Heart left ventricle (tissue), 16 donors: ENCODE measurements at regions of chr11 and their contacts with region 1.

Region 1: GRCh38 chr11:63227521-63228107 is 15.8 kb downstream of the SLC22A25 start:
- DNase-seq: no peak
- ATAC-seq: no peak
- H3K4me3 ChIP-seq: no peak overlapping the region
- H3K27ac ChIP-seq: no peak overlapping the region
- H3K4me1 ChIP-seq: no peaks in the 10 kb centered on the region
- H3K27me3 ChIP-seq: peaks cover 0 to 8% (median 0%) of the 10 kb centered on the region in 9 donors
- CTCF ChIP-seq: no peak
- POLR2A ChIP-seq: no peak

Region 2: DNA sequence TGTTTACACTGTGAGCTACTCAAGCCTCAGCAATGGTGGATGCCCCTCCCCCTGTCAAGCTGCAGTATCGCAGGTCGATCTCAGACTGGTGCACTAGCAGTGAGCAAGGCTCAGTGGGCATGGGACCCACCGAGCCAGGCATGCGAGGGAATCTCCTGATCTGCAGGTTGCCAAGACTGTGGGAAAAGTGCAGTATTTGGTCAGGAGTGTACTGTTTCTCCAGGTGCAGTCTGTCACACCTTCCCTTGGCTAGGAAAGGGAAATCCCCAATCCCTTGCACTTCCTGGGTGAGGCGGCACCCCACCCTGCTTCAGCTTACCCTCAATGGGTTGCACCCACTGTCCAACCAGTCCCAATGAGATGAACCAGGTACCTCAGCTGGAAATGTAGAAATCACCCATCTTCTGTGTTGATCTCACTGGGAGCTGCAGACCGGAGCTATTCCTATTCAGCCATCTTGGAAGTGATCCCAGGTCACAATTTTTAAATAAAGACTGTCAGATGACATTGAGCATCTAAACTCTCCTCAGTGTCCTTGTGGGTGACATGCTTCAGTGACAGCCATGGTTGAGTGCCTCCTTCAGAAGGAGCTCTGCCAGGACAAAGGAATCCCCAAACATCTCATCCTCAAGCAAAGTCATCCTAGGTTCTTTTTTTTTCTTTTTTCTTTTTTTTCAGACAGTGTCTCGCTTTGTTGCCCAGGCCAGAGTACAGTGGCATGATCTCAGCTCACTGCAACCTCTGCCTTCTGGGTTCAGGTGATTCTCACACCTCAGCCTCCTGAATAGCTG is 94.4 kb before region 1 on chr11:
- intact Hi-C with region 1: loop called in 1 of 10 experiments (anchors 10 kb)
- DNase-seq: no peak
- ATAC-seq: no peak
- H3K4me3 ChIP-seq: no peak overlapping the region
- H3K27ac ChIP-seq: no peak overlapping the region
- H3K4me1 ChIP-seq: no peaks in the 10 kb centered on the region
- H3K27me3 ChIP-seq: peaks cover 0 to 5% (median 0%) of the 10 kb centered on the region in 9 donors
- CTCF ChIP-seq: no peak
- POLR2A ChIP-seq: no peak

Region 3: GRCh38 chr11:63518548-63518947 is 290.9 kb after region 1 on chr11:
- intact Hi-C with region 1: no loop called
- DNase-seq: no peak
- ATAC-seq: no peak
- H3K4me3 ChIP-seq: no peak overlapping the region
- H3K27ac ChIP-seq: no peak overlapping the region
- H3K4me1 ChIP-seq: no peaks in the 10 kb centered on the region
- H3K27me3 ChIP-seq: no peaks in the 10 kb centered on the region
- CTCF ChIP-seq: no peak
- POLR2A ChIP-seq: no peak